B cell (primary cell): ENCODE measurements at regions of chr2 and their contacts with region 1.

Region 1: DNA sequence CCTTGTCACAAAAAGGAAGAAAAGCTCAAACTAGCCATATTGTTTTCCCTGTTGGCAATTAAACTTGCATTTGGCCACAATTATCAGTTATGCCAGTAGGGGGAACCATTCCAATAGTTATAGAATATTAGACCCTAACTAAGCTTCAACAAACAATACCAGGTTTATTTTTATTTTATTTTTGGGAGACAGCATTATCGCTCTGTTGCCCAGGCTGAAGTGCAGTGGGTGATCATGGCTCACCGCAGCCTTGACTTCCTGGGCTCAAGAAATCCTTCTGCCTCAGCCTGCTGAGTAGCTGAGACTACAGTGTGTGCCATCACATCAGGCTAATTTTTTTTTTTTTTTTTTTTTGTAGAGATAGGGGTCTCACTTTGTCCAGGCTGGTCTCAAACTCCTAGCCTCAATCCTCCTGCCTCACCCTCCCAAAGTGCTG is 102.1 kb downstream of the ATAD2B start:
- DNase-seq: peak; percentile 76
- ATAC-seq: peak; percentile 41
- H3K4me3 ChIP-seq: no peak overlapping the region
- H3K4me3 Mint-ChIP-seq: no peak overlapping the region
- H3K27ac ChIP-seq: no peak overlapping the region
- H3K27ac Mint-ChIP-seq: no peak overlapping the region
- H3K4me1 ChIP-seq: no peaks in the 10 kb centered on the region
- H3K4me1 Mint-ChIP-seq: no peaks in the 10 kb centered on the region
- H3K27me3 ChIP-seq: no peaks in the 10 kb centered on the region
- H3K27me3 Mint-ChIP-seq: no peaks in the 10 kb centered on the region
- CTCF ChIP-seq: peak; percentile 91

Region 2: GRCh38 chr2:23835988-23836387 is 11.2 kb after region 1 on chr2:
- CTCF ChIA-PET with region 1: interaction called, 15 read pairs
- POLR2A ChIA-PET with region 1: no interaction called
- intact Hi-C with region 1: no loop called
- DNase-seq: no peak
- ATAC-seq: no peak
- H3K4me3 ChIP-seq: no peak overlapping the region
- H3K4me3 Mint-ChIP-seq: no peak overlapping the region
- H3K27ac ChIP-seq: no peak overlapping the region
- H3K27ac Mint-ChIP-seq: no peak overlapping the region
- H3K4me1 ChIP-seq: no peaks in the 10 kb centered on the region
- H3K4me1 Mint-ChIP-seq: no peaks in the 10 kb centered on the region
- H3K27me3 ChIP-seq: no peaks in the 10 kb centered on the region
- H3K27me3 Mint-ChIP-seq: no peaks in the 10 kb centered on the region
- CTCF ChIP-seq: no peak

Region 3: DNA sequence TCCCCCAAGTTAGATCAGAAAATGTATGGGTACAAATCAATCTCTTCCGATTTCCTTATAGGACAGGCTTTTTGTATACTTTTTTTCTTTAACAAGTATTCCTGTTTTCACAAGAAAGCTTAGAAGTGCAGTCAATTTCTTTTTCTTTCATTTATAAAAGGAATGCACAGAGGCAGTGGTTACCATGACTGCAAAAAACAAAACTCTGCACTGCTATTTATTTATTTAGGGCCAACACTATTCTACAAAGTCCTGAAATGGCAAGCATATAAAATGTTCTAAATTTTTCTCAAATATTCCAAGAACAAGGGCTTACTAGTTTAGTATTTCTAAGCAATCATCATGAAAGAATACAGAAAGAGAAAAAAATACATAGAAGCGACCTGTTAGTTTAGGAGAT is 79.9 kb after region 1 on chr2:
- CTCF ChIA-PET with region 1: no interaction called
- POLR2A ChIA-PET with region 1: no interaction called
- intact Hi-C with region 1: no loop called
- DNase-seq: no peak
- ATAC-seq: no peak
- H3K4me3 ChIP-seq: no peak overlapping the region
- H3K4me3 Mint-ChIP-seq: no peak overlapping the region
- H3K27ac ChIP-seq: no peak overlapping the region
- H3K27ac Mint-ChIP-seq: no peak overlapping the region
- H3K4me1 ChIP-seq: peaks cover 0 to 5% of the 10 kb centered on the region in 2 donors
- H3K4me1 Mint-ChIP-seq: peaks cover 35% of the 10 kb centered on the region
- H3K27me3 ChIP-seq: no peaks in the 10 kb centered on the region
- H3K27me3 Mint-ChIP-seq: no peaks in the 10 kb centered on the region
- CTCF ChIP-seq: no peak

Region 4: DNA sequence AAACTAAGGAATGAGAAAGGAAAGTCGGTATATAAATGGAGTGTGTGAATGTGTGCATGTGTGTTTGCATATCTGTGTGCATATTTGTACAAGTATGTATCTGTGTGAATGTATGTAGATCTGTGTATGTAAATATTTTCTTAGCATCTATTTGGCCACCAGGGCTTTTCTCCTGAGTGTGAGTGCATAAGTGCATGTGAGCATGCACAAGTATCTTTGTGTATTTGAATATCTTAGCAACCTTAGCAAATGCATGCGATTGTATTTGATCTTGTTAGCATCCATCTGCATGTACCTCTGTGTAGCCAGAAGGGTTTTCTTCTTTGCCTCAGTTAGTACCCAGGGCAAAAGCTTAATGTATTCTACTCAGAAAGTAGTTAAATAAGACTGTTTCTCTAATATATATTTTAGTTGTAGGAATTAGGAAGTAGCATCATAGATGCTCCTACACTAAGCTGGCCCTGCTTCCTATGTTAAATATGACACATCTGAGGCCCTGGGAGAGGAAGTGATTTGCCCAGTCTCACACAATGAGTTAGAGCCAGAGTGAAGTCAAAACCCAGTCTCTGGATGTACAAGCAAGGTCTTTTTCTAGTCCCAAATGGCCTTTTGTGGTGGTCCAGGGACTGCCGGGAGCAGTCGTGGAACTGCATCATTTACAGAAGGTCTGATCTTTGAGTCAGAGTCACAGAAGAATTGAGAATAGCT is 233.9 kb after region 1 on chr2:
- CTCF ChIA-PET with region 1: interaction called, 27 read pairs
- POLR2A ChIA-PET with region 1: no interaction called
- intact Hi-C with region 1: loop called (anchors 1 kb)
- DNase-seq: no peak
- ATAC-seq: no peak
- H3K4me3 ChIP-seq: no peak overlapping the region
- H3K4me3 Mint-ChIP-seq: no peak overlapping the region
- H3K27ac ChIP-seq: no peak overlapping the region
- H3K27ac Mint-ChIP-seq: no peak overlapping the region
- H3K4me1 ChIP-seq: no peaks in the 10 kb centered on the region
- H3K4me1 Mint-ChIP-seq: no peaks in the 10 kb centered on the region
- H3K27me3 ChIP-seq: no peaks in the 10 kb centered on the region
- H3K27me3 Mint-ChIP-seq: no peaks in the 10 kb centered on the region
- CTCF ChIP-seq: no peak

Region 5: GRCh38 chr2:24105816-24106215 is 281.0 kb after region 1 on chr2:
- CTCF ChIA-PET with region 1: no interaction called
- POLR2A ChIA-PET with region 1: no interaction called
- intact Hi-C with region 1: no loop called
- DNase-seq: no peak
- ATAC-seq: no peak
- H3K4me3 ChIP-seq: no peak overlapping the region
- H3K4me3 Mint-ChIP-seq: no peak overlapping the region
- H3K27ac ChIP-seq: no peak overlapping the region
- H3K27ac Mint-ChIP-seq: no peak overlapping the region
- H3K4me1 ChIP-seq: peaks cover 18 to 22% of the 10 kb centered on the region in 2 donors
- H3K4me1 Mint-ChIP-seq: peaks cover 22% of the 10 kb centered on the region
- H3K27me3 ChIP-seq: no peaks in the 10 kb centered on the region
- H3K27me3 Mint-ChIP-seq: no peaks in the 10 kb centered on the region
- CTCF ChIP-seq: no peak

Region 6: DNA sequence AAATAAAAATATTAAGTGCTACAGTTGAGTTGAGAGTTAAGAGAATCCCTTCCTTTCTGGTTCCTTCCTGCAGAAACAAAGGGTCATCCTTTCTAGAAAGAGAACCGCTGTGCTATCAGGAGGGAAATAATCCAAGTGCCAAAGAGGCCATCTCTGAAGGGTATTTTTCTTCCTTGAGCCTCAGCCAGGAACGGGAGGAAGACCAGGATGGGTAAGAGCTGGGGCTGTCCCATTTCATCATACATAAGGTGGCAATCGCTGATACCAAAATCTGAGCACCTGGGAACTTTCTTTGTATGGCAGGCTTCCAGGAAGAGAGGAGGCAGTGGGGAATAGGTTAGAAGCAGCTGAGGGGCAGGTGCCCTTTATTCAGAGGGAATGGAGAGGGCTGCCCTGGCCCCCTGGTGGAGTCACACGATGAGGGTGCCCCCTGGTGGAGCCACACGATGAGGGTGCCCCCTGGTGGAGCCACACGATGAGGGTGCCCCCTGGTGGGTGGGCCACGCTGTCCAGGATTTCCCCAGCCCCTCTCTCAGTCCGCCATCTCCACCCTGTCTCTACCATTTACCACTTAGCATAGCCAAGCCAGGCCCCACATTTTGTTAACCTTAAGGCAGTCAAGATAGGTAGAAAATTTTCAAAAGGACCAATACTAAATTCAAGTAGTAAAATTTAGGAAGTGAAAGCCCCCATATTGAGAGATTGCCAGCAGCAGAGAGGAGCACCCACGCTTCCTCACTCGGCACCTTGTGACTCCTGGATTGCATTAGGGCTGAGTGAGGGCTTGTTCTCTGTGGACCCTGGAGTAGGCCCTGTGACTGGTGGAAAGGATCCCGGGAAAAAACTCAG is 339.6 kb after region 1 on chr2:
- CTCF ChIA-PET with region 1: interaction called, 22 read pairs
- POLR2A ChIA-PET with region 1: no interaction called
- intact Hi-C with region 1: loop called (anchors 1 kb)
- DNase-seq: peak; percentile 60
- ATAC-seq: peak; percentile 71
- H3K4me3 ChIP-seq: no peak overlapping the region
- H3K4me3 Mint-ChIP-seq: peak overlapping the region; percentile 50
- H3K27ac ChIP-seq: no peak overlapping the region
- H3K27ac Mint-ChIP-seq: no peak overlapping the region
- H3K4me1 ChIP-seq: peaks cover 8 to 11% of the 10 kb centered on the region in 2 donors
- H3K4me1 Mint-ChIP-seq: peaks cover 9% of the 10 kb centered on the region
- H3K27me3 ChIP-seq: no peaks in the 10 kb centered on the region
- H3K27me3 Mint-ChIP-seq: no peaks in the 10 kb centered on the region
- CTCF ChIP-seq: peak; percentile 72